Dendritic cell treated with granulocyte-macrophage colony-stimulating factor and Interleukin-4, amounts not matched to agents 40 ng/mL and 50 ng/mL, for 4 days (primary cell): ENCODE measurements at regions of chr10 and their contacts with region 1.

Region 1: GRCh38 chr10:109889867-109890266 is 33.4 kb downstream of the XPNPEP1 start:
- H3K4me3 Mint-ChIP-seq: no peak overlapping the region
- H3K27ac Mint-ChIP-seq: no peak overlapping the region
- H3K4me1 Mint-ChIP-seq: peaks cover 32% of the 10 kb centered on the region
- H3K27me3 Mint-ChIP-seq: no peaks in the 10 kb centered on the region

Region 2: GRCh38 chr10:110279407-110279986 is 389.6 kb after region 1 on chr10:
- intact Hi-C with region 1: loop called (anchors 5 kb)
- H3K4me3 Mint-ChIP-seq: no peak overlapping the region
- H3K27ac Mint-ChIP-seq: no peak overlapping the region
- H3K4me1 Mint-ChIP-seq: peaks cover 3% of the 10 kb centered on the region
- H3K27me3 Mint-ChIP-seq: no peaks in the 10 kb centered on the region